Ovary (tissue), 10 donors: ENCODE measurements at regions of chr13 and their contacts with region 1.

Region 1: GRCh38 chr13:42039946-42040729 is 8.3 kb upstream of the DGKH start:
- DNase-seq: peak; percentile 91 to 95 (median 92)
- H3K4me3 ChIP-seq: peak overlapping the region; percentile 89
- H3K27ac ChIP-seq: peak overlapping the region; percentile 63 to 90
- H3K4me1 ChIP-seq: no peaks in the 10 kb centered on the region
- H3K27me3 ChIP-seq: no peaks in the 10 kb centered on the region
- CTCF ChIP-seq: peak in 2 of 3 donors; percentile 28 to 36
- EP300 ChIP-seq: no peak
- POLR2A ChIP-seq: peak; percentile 82

Region 2: GRCh38 chr13:41668130-41668757 is 371.9 kb before region 1 on chr13:
- intact Hi-C with region 1: loop called in 1 of 4 experiments (anchors 5 kb)
- DNase-seq: peak in 4 of 5 donors; percentile 35 to 64 (median 44)
- H3K4me3 ChIP-seq: no peak overlapping the region
- H3K27ac ChIP-seq: no peak overlapping the region
- H3K4me1 ChIP-seq: no peaks in the 10 kb centered on the region
- H3K27me3 ChIP-seq: no peaks in the 10 kb centered on the region
- CTCF ChIP-seq: peak; percentile 58 to 86 (median 84)
- EP300 ChIP-seq: no peak
- POLR2A ChIP-seq: no peak

Region 3: GRCh38 chr13:41694545-41695301 is 345.4 kb before region 1 on chr13:
- intact Hi-C with region 1: loop called in 1 of 4 experiments (anchors 10 kb)
- DNase-seq: peak; percentile 55 to 73 (median 68)
- H3K4me3 ChIP-seq: no peak overlapping the region
- H3K27ac ChIP-seq: peak overlapping the region in 1 of 2 donors; percentile 65
- H3K4me1 ChIP-seq: peaks cover 3% of the 10 kb centered on the region
- H3K27me3 ChIP-seq: no peaks in the 10 kb centered on the region
- CTCF ChIP-seq: no peak
- EP300 ChIP-seq: no peak
- POLR2A ChIP-seq: no peak

Region 4: DNA sequence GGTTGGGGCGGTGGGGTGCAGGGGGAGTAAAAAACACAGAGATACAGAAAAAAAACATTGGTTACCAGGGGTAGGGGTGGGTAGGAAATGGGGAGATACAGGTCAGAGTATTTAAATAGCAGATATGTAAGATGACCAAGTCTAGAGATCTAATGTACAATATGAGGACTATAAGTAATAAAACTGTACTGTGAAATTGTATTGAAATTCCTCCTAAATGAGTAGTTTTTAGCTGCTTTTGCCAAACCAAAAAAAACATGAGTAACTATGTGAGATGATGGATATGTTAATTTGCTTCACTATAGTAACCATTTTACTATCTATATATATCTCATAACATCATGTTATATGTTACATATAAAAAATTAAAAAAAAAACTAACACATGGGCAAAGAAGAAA is 108.8 kb before region 1 on chr13:
- intact Hi-C with region 1: no loop called
- DNase-seq: no peak
- H3K4me3 ChIP-seq: no peak overlapping the region
- H3K27ac ChIP-seq: no peak overlapping the region
- H3K4me1 ChIP-seq: no peaks in the 10 kb centered on the region
- H3K27me3 ChIP-seq: no peaks in the 10 kb centered on the region
- CTCF ChIP-seq: no peak
- EP300 ChIP-seq: no peak
- POLR2A ChIP-seq: no peak

Region 5: DNA sequence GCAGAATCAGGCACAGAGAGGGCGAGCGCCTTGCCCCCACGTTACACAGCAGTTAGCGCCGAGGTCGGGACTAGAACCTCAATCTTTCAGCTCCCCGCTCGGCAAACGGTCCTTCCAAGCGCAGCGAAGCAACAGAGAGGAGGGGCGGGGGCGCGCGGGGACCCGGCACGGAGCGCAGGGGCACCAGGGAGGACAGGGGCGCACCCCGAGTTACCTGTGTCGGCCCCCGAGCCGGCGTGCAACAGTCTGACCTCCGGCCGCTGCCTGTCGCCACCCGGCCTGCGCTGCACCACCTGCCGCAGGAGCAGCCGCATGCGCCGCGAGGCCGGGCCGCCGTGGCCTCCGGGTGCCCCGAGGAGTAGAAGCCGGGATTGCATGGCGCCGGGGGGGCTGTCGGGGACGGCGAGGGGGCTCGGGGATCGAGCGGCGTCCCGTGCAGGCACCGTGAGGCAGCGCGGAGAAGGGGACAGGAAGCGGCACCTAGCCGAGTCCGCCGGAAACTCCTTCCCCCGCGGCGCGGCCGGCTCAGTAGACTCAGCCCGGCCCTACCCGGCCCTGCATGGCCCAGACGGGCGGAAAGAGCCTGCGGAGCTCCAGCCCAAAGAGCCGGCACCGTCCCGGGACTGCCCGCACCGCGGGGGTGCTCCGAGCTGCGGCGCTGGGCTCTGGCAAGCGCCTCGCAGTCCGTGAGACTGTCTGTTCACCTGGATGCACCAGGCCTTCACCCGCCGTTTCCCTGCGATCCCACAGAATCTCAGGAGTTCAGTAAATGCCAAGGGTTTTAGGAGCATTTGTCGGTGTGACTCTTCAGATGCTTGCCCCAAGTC is 79.3 kb before region 1 on chr13 and contains the start of gene VWA8:
- intact Hi-C with region 1: loop called in 1 of 4 experiments (anchors 10 kb)
- DNase-seq: peak; percentile 73 to 88 (median 80)
- H3K4me3 ChIP-seq: peak within 1 kb of the TSS; percentile 76
- H3K27ac ChIP-seq: peak within 1 kb of the TSS; percentile 66 to 71
- H3K4me1 ChIP-seq: peaks cover 2% of the 10 kb centered on the region
- H3K27me3 ChIP-seq: no peaks in the 10 kb centered on the region
- CTCF ChIP-seq: no peak
- EP300 ChIP-seq: no peak
- POLR2A ChIP-seq: no peak
- total RNA-seq, gene VWA8: 19.9 to 25.1 (median 21.3) TPM